ENCODE measurements at regions of chr12 and their contacts with region 1.

Region 1: DNA sequence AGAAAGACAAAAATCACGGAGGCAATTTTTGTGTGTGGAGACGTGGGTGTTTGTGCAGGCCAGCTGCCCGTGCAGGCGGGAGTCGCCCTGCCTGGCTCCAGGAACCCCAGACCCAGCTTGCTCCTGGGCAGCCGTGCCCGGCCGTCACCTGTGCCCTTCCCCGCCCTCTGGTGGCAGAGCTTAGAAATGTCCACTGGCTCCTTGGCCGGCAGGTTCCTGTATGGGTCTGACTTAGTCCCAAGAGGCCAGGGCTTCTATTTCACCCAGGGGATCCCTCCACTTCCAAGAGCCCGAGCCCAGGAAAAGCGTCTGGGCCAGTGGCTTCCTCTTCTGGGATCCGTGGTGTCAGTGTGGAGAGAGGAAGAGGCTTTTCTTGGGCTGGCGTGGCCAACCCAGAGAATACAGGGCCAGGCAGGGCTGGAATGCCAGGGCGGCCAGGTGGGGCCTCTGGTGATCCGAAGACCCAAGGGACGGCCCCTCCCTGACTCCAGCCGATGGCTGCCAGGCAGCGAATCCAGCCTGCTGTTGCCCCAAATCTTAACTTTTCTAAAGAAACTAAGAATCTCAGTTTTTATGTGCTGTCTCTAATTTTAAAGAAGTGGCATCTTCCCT is 120.9 kb downstream of the TMEM132C start:
- DNase-seq: peak in 3 of 5 donors; percentile 12 to 40 (median 34)
- ATAC-seq: peak in 3 of 4 donors; percentile 50 to 81 (median 50)
- H3K4me3 ChIP-seq: no peak overlapping the region
- H3K27ac ChIP-seq: peak overlapping the region in 2 of 12 donors; percentile 29
- H3K4me1 ChIP-seq: peaks cover 0 to 12% (median 0%) of the 10 kb centered on the region in 12 donors
- H3K27me3 ChIP-seq: peaks cover 0 to 56% (median 2%) of the 10 kb centered on the region in 9 donors
- CTCF ChIP-seq: peak; percentile 35 to 68 (median 50)
- POLR2A ChIP-seq: no peak

Region 2: GRCh38 chr12:128276471-128276870 is 111.4 kb before region 1 on chr12:
- intact Hi-C with region 1: loop called in 1 of 10 experiments (anchors 10 kb)
- DNase-seq: no peak
- ATAC-seq: no peak
- H3K4me3 ChIP-seq: no peak overlapping the region
- H3K27ac ChIP-seq: no peak overlapping the region
- H3K4me1 ChIP-seq: no peaks in the 10 kb centered on the region
- H3K27me3 ChIP-seq: peaks cover 0 to 10% (median 0%) of the 10 kb centered on the region in 9 donors
- CTCF ChIP-seq: no peak
- POLR2A ChIP-seq: no peak

Region 3: DNA sequence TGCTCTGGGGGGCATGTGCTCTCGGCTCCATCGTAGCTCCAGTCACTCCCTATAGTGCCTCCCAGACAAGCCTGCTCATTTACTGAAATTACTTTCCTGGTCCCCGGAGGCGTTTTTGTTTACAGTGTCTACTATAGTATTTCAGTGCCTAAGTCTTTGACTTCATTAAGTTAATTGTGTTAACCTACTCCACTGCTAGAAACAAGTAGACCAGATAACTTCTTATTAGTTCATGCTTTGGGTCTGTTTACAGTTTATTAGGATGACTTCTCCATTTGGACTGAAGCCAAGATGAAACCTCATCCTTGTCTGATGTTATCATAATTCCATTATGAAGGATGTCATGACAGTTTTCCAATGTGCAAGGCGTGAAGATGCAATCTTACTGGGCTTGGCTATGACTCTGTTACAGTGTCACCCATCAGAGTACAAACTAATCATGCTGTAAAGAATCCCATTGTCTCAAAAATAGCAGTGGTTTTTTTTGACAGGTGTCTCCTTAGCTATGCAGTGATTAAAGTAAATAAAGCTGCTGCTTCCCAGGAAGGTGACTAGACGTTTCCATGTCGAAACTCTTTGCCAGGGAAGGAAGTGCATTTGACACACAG is 61.4 kb after region 1 on chr12:
- intact Hi-C with region 1: no loop called
- DNase-seq: no peak
- ATAC-seq: no peak
- H3K4me3 ChIP-seq: no peak overlapping the region
- H3K27ac ChIP-seq: no peak overlapping the region
- H3K4me1 ChIP-seq: no peaks in the 10 kb centered on the region
- H3K27me3 ChIP-seq: no peaks in the 10 kb centered on the region
- CTCF ChIP-seq: no peak
- POLR2A ChIP-seq: no peak

Measured in heart left ventricle (tissue), 16 donors.